Naive thymus-derived CD4-positive, alpha-beta T cell (primary cell): ENCODE measurements at regions of chr7 and their contacts with region 1.

Region 1: DNA sequence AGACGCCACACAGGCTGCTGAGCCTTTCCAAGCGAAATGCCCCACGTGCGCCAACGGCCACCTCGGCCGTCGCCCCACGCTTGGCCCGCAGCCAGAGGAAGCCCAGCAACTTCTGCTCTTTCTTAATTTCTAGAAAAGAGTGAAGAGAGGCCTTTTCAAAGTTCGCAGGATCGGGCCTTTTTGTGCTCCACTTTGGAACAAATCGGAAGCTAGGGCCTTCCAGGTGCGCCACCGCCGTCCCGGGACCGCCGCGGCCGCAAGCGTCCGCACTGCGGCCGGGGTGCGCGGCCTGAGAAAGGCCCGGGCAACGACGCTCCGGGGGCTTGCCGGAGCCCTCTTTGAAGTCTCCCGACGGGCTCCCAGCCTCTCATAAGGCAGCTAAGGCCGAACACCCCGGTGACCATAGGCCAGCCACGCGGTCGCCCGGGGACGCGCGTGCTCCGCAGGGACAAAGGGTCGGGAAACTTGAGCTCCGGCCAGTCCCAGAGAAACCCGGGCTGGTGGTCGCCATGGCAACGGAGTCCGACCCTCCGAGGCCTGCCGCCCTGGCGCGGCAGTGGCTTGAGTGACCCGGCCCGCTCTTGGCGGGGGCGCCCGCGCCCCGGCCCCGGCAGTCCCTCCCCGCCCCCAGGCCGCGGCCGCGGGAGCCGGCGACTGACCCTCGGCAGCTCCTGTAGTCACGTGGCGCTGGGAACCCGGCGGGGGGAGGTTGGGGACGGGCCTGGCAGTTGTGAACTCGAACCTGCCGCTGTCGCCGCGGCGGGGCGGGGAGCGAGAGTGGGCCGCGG is at the start of gene REPIN1:
- DNase-seq: peak; percentile 65 to 88 (median 80)
- ATAC-seq: peak; percentile 74
- H3K4me3 ChIP-seq: peak within 1 kb of the TSS; percentile 99
- H3K4me3 Mint-ChIP-seq: peak within 1 kb of the TSS; percentile 91 to 97 (median 95)
- H3K27ac ChIP-seq: peak within 1 kb of the TSS; percentile 83
- H3K27ac Mint-ChIP-seq: peak within 1 kb of the TSS; percentile 88 to 97 (median 95)
- H3K4me1 ChIP-seq: peaks cover 11 to 39% of the 10 kb centered on the region in 2 donors
- H3K4me1 Mint-ChIP-seq: peaks cover 24 to 67% (median 58%) of the 10 kb centered on the region in 7 donors
- H3K27me3 ChIP-seq: no peaks in the 10 kb centered on the region
- H3K27me3 Mint-ChIP-seq: no peaks in the 10 kb centered on the region
- total RNA-seq, gene REPIN1: 68.5 to 103 (median 79.7) TPM

Region 2: DNA sequence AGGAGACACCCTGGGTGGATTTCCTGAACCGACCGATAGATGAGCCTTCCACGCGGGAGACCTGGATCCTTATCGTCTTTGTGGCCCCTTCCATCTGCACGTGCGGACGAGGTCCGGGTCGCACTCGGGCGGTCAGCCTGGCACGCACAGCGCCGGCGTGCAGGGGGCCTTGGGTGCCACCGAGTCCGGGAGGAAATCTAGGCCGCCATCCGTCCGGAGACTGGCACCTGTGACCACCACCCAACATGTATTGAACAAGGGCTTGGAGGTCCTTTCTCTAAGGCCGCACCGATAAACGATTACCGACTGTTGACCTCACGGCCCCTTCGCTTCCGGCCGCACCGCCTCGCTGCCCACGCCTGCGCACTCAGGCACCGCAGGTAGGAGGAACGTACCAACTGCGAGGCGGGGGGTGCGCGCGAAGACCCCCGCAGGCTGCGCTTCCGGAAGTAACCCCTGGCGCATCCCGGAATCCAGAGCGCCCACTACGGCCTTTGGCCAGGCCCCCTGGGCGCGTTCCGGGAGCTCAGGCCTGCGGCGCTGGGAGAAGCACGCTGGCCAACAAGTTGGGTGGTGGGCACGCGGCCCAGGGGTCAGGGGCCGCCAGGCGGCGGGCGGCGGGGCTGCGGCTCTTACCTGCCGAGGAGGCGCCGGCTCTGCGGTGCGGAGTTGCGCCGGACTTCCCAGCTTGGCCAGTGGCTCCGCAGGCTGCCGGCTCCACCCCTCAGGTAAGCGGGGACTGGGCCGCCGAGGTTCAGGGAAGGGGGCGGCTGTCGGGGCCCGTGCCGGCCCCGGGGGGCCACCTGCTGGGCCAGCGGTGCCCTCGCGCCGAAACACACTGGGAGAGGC is 45.2 kb before region 1 on chr7 and contains the starts of genes ACTR3C and LRRC61:
- CTCF ChIA-PET with region 1: no interaction called
- POLR2A ChIA-PET with region 1: interaction called, 6 read pairs
- intact Hi-C with region 1: loop called in 1 of 2 experiments (anchors 2 kb)
- DNase-seq: peak; percentile 23 to 75 (median 41)
- ATAC-seq: peak; percentile 67
- H3K4me3 ChIP-seq: peak within 1 kb of the TSS; percentile 95
- H3K4me3 Mint-ChIP-seq: peak within 1 kb of the TSS; percentile 88 to 100 (median 98)
- H3K27ac ChIP-seq: peak within 1 kb of the TSS; percentile 85
- H3K27ac Mint-ChIP-seq: peak within 1 kb of the TSS; percentile 94 to 99 (median 98)
- H3K4me1 ChIP-seq: peaks cover 5 to 21% of the 10 kb centered on the region in 2 donors
- H3K4me1 Mint-ChIP-seq: peaks cover 25 to 57% (median 44%) of the 10 kb centered on the region in 7 donors
- H3K27me3 ChIP-seq: no peaks in the 10 kb centered on the region
- H3K27me3 Mint-ChIP-seq: no peaks in the 10 kb centered on the region
- total RNA-seq, gene ACTR3C: 7.0 to 13.2 (median 10.6) TPM
- total RNA-seq, gene LRRC61: 8.3 to 30.0 (median 11.5) TPM

Region 3: GRCh38 chr7:150974468-150975391 is 606.4 kb after region 1 on chr7:
- CTCF ChIA-PET with region 1: no interaction called
- POLR2A ChIA-PET with region 1: no interaction called
- intact Hi-C with region 1: loop called in 1 of 2 experiments (anchors 5 kb)
- DNase-seq: peak; percentile 63 to 84 (median 80)
- ATAC-seq: peak; percentile 85
- H3K4me3 ChIP-seq: peak overlapping the region; percentile 63
- H3K4me3 Mint-ChIP-seq: peak overlapping the region; percentile 85 to 92 (median 88)
- H3K27ac ChIP-seq: peak overlapping the region; percentile 73
- H3K27ac Mint-ChIP-seq: peak overlapping the region; percentile 59 to 97 (median 95)
- H3K4me1 ChIP-seq: peaks cover 20 to 47% of the 10 kb centered on the region in 2 donors
- H3K4me1 Mint-ChIP-seq: peaks cover 33 to 62% (median 55%) of the 10 kb centered on the region in 7 donors
- H3K27me3 ChIP-seq: peaks cover 7 to 13% of the 10 kb centered on the region in 2 donors
- H3K27me3 Mint-ChIP-seq: peaks cover 9 to 36% (median 25%) of the 10 kb centered on the region in 5 donors